Activated CD4-positive, alpha-beta T cell treated with anti-CD3 and anti-CD28 coated beads, Interleukin-2, amount 10 ng/mL, durations not matched to agents 7 days and 5 days (primary cell): ENCODE measurements at regions of chr7 and their contacts with region 1.

Region 1: DNA sequence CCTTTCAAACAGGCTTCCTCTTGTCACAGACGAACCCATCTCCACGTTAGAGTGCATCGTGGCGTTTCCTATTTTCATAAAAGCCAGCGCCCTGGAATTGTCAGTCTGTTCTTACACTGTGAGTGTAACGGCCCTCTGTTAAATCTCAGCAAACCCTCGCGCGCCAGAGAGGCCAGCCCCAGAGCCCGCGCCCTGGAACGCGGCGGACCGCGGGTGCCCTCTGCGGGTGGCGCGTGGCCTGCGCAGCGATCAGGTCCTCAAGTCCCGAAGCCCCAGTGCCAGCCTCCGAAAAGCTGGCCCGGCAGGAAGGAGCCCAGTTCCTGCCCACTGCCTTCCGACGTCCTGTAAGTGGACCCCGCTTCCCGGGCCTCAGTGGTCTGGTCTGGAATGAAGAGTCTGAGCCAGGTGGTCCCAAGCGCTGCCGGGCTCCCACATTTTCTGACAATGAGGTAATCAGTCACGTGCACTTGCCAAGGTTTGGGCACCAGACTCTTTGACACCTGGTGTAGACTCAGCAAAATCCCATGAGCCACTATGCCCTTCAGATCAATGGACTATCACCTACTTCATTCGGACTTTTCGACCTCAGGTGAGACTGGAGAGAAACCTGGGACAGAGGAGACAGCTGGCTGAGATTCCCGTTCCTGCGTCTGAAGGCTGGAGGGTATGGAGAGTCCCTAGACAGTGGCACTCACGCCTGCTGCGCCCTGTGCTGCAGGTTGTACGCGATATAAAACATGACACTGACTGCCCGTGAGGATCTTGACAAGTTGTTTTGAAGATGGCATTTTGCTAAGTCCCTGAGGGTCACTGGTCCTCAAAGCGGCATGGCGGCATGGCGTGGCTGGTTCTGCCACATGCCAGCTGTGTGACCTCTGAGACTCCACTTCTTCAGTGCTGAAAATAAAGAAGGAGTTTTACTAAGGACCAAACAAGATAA is 109.4 kb upstream of the LANCL2 start:
- DNase-seq: peak; percentile 62
- H3K4me3 Mint-ChIP-seq: peak overlapping the region; percentile 78
- H3K27ac Mint-ChIP-seq: peak overlapping the region; percentile 78
- H3K4me1 Mint-ChIP-seq: peaks cover 8% of the 10 kb centered on the region
- H3K27me3 Mint-ChIP-seq: peaks cover 42% of the 10 kb centered on the region

Region 2: DNA sequence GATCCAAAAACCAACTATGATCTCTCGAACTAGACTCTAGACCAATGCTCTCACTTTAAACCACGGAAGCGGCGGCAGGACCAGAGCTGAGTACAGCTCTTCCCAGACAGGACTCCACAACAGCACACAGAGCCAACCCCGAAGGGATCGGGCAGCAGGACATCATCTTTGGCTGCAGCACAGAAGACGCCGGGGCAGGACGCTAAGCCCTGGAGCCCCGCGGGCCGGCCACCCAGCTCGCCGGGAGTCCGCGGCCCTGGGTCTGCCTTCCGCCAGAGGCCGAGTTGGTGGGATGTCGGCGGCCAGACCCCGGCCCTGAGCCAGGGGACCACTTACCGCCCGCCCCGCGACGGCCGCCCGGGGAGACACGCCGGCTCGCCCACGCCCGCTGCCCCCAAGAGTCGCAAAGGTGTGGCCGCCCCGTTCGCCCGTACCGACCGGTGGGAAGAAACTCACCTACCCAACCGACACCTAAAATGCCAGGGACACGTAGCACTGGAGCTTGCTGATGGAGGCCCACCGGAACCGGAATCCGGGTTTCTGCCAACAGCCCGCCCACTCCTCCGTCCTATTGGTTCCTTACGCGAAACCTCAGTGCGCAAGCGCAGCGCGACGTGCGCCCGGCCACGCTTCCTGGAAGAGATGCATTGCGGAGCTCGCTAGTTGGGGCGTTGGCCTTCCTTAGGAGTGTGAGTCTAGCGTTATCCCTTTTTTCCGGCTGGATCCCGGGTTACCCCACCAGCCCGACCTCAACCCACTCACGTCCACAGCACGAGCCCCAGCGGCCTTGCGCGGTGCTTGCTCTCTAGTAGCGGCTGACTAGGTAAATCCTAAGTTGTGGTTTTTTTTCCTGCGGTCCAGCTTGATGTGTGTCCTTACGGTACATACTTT is 496.8 kb before region 1 on chr7 and contains the start of gene SEC61G:
- CTCF ChIA-PET with region 1: interaction called, 13 read pairs
- POLR2A ChIA-PET with region 1: no interaction called
- DNase-seq: peak; percentile 96
- H3K4me3 Mint-ChIP-seq: peak within 1 kb of the TSS; percentile 96
- H3K27ac Mint-ChIP-seq: peak within 1 kb of the TSS; percentile 97
- H3K4me1 Mint-ChIP-seq: peaks cover 27% of the 10 kb centered on the region
- H3K27me3 Mint-ChIP-seq: peaks cover under 1% of the 10 kb centered on the region
- total RNA-seq, gene SEC61G: 55.4 to 106 TPM

Region 3: DNA sequence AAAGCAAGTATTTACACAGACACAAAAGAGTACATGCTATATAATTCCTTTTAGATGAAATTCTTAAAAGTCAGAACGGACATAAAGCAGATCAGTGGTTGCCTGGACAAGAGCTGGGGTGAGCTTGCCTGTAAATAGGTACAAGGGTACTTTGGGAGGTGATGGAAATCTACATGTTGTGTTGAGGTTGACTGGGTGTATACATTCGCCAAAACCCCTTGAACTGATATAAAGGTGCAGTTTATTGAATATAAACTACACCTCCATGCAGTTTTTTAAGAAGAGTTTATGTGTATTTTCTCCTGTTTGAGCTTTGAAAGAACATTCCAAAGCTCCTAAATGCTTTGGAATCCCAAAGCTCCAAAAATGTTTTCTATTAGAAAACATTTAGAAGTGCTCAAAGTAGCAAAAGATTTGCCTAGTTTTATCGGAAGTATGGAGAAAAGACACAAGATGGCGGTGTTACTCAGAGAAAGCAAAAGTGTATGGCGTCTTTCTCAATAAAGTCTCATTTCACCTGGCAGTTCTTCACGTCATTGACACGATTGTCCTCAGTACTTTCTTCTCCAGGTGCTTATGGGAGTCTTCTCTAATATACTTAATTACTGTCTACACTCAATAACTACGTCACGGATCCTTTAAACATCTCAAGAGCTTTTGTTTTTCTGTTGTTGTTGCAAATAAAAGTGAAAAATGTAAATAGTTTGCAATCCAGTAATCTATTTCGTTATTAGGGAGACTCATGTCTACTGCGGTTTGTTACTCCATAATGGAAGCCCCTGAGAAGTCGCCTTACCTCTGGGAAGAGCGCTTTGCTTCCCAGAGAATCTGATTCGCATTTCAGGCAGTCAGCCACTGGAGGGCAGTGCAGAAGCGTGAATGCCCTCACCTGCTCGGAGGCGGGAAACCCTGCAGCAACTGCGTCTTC is 482.0 kb before region 1 on chr7:
- CTCF ChIA-PET with region 1: interaction called, 30 read pairs
- POLR2A ChIA-PET with region 1: no interaction called
- DNase-seq: peak; percentile 74
- H3K4me3 Mint-ChIP-seq: peak overlapping the region; percentile 64
- H3K27ac Mint-ChIP-seq: peak overlapping the region; percentile 39
- H3K4me1 Mint-ChIP-seq: peaks cover 10% of the 10 kb centered on the region
- H3K27me3 Mint-ChIP-seq: peaks cover 29% of the 10 kb centered on the region